Activated B cell treated with CpG ODN at 0.5 μM for 24 hours (primary cell): ENCODE measurements at regions of chr12 and their contacts with region 1.

Region 1: DNA sequence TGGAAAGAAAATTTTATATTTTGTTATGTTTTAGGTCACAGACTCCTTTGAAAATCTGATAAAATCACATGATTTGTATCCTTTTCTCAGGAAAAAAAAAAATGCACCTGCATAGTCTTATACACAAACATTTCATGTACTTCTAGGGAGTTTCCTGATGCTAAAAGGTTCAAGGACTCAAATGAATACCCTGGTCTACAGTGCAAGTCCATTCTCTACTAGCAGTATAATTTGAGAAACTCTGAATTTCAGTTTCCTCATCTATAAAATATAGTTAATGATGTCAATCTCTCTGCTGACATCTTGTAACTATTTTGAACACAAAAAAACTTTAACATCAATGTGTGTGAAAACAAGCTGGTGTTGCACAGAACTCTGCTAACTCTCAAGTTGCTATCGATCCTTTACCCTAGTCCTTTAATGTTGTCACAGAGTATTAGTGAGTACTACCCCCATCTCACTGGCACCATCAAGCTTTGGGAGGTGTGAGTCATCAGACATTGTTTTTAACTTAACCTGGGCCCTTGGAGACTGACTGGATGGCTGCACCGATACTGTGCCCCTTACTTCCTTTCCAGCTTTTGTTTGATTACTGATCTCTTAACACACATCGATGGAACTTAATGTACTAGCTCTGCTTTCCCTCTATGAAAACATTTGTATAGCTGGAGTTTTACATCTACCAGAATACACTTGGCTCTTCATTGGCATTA is 251.9 kb upstream of the SOX5 start:
- DNase-seq: no peak
- ATAC-seq: peak; percentile 92
- H3K4me3 Mint-ChIP-seq: peak overlapping the region; percentile 4
- H3K27ac Mint-ChIP-seq: peak overlapping the region; percentile 9
- H3K4me1 Mint-ChIP-seq: peaks cover 33% of the 10 kb centered on the region
- H3K27me3 Mint-ChIP-seq: no peaks in the 10 kb centered on the region
- CTCF ChIP-seq: no peak

Region 2: GRCh38 chr12:24212496-24212895 is 11.1 kb after region 1 on chr12:
- CTCF ChIA-PET with region 1: interaction called, 3 read pairs
- POLR2A ChIA-PET with region 1: interaction called, 3 read pairs
- intact Hi-C with region 1: loop called (anchors 2 kb)
- DNase-seq: no peak
- ATAC-seq: no peak
- H3K4me3 Mint-ChIP-seq: no peak overlapping the region
- H3K27ac Mint-ChIP-seq: no peak overlapping the region
- H3K4me1 Mint-ChIP-seq: no peaks in the 10 kb centered on the region
- H3K27me3 Mint-ChIP-seq: no peaks in the 10 kb centered on the region
- CTCF ChIP-seq: no peak

Region 3: DNA sequence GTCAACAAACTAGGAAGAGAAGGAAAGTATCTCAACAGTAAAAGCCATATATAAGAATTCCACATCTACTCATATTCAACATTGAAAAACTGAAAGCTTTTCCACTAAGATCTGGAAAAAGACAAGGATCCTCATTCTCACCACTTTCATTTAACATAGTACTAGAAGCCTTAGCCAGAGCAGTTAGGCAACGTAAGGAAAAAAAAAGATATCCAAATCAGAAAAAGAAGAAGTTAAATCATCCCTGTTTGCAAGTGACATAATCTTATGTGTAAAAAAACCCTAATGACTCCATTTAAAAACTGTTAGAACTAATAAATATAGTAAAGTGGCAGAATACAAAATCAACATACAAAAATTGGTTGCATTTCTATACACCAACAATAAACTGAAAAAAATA is 321.3 kb after region 1 on chr12:
- CTCF ChIA-PET with region 1: no interaction called
- POLR2A ChIA-PET with region 1: no interaction called
- intact Hi-C with region 1: no loop called
- DNase-seq: no peak
- ATAC-seq: no peak
- H3K4me3 Mint-ChIP-seq: no peak overlapping the region
- H3K27ac Mint-ChIP-seq: no peak overlapping the region
- H3K4me1 Mint-ChIP-seq: no peaks in the 10 kb centered on the region
- H3K27me3 Mint-ChIP-seq: no peaks in the 10 kb centered on the region
- CTCF ChIP-seq: no peak